ENCODE measurements at regions of chr6 and their contacts with region 1.

Region 1: GRCh38 chr6:18122124-18123093 is at the start of gene NHLRC1:
- DNase-seq: peak; percentile 67
- H3K4me3 ChIP-seq: peak within 1 kb of the TSS; percentile 64
- H3K27ac ChIP-seq: no peak within 1 kb of the TSS
- H3K27me3 ChIP-seq: no peaks in the 10 kb centered on the region
- CTCF ChIP-seq: peak; percentile 91
- polyA plus RNA-seq, gene NHLRC1: 1.4 TPM in 2 replicates

Region 2: GRCh38 chr6:17820055-17820454 is 302.4 kb before region 1 on chr6:
- CTCF ChIA-PET with region 1: interaction called, 38 read pairs
- POLR2A ChIA-PET with region 1: no interaction called
- DNase-seq: no peak
- H3K4me3 ChIP-seq: no peak overlapping the region
- H3K27ac ChIP-seq: peak overlapping the region; percentile 3
- H3K27me3 ChIP-seq: no peaks in the 10 kb centered on the region
- CTCF ChIP-seq: no peak

Region 3: GRCh38 chr6:17987576-17988421 is 134.6 kb before region 1 on chr6 and contains the start of gene KIF13A:
- CTCF ChIA-PET with region 1: interaction called, 10 read pairs
- POLR2A ChIA-PET with region 1: no interaction called
- DNase-seq: no peak
- H3K4me3 ChIP-seq: peak within 1 kb of the TSS; percentile 73
- H3K27ac ChIP-seq: peak within 1 kb of the TSS; percentile 68
- H3K27me3 ChIP-seq: no peaks in the 10 kb centered on the region
- CTCF ChIP-seq: 0 out of 2 replicates have a peak, but pooled peaks have one; percentile 8
- polyA plus RNA-seq, gene KIF13A: 56.1 and 57.7 TPM in 2 replicates

Region 4: DNA sequence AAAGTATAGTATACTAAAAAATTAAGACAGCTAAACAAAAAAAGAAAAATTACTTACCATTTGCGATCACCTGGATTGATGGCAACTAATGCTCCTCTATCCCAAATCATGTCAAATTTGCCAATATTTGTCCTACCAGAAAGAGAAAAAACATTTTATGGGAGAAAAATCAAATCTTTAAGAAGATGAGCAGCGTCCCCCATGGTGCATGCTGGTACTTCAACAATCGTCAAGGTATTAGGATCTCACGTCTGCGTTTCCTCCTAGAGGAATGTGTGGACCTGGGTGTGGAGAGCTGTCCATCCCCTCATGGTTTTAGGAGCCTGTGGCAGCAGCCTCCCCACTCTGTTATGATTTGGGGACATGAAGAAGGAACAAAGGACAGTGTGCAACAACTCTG is 16.5 kb after region 1 on chr6:
- CTCF ChIA-PET with region 1: interaction called, 20 read pairs
- POLR2A ChIA-PET with region 1: no interaction called
- DNase-seq: no peak
- H3K4me3 ChIP-seq: no peak overlapping the region
- H3K27ac ChIP-seq: no peak overlapping the region
- H3K27me3 ChIP-seq: no peaks in the 10 kb centered on the region
- CTCF ChIP-seq: no peak